Activated naive CD4-positive, alpha-beta T cell treated with anti-CD3 and anti-CD28 coated beads for 36 hours (primary cell): ENCODE measurements at regions of chr17 and their contacts with region 1.

Region 1: GRCh38 chr17:78140169-78140976 is 5.8 kb upstream of the C17orf99 start:
- DNase-seq: peak; percentile 96
- H3K4me3 Mint-ChIP-seq: peak overlapping the region; percentile 40
- H3K27ac Mint-ChIP-seq: peak overlapping the region; percentile 28
- H3K4me1 Mint-ChIP-seq: peaks cover 64% of the 10 kb centered on the region
- H3K27me3 Mint-ChIP-seq: no peaks in the 10 kb centered on the region

Region 2: DNA sequence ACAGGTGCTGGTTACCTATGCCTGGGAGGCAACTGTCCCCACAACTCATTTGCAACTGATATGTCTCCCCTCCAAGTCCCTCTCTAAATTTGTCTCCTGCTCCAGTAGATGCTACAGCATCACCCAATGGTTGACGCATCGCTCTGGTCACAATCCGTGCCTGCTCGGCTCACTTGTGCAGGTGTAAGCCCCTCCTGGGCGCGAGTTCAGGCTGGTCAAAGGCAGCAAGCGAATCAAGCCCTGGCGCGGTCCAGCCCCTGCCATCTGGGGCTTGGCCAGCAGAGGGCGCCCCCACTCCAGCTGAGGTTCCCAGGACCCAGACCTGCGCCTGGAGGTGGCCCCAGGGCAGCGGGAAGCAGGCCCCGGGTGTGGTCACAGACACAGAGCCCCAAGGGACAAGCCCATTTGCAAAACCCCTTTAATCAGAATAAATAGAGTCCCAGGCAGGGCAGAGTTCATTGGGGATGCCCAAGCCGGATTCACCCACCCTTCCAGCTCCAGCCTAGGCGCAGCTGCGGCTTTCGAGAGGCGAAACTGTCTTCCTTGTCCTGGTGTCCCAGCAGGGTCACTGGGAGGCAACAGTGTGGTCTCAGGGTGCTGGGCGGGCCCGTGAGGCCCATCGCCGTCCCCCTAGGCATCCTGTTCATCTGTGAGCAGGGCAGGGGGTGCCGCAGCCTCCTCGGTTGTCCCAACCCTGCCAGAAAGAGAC is 27.7 kb before region 1 on chr17:
- CTCF ChIA-PET with region 1: interaction called, 100 read pairs
- intact Hi-C with region 1: no loop called
- DNase-seq: peak; percentile 84
- H3K4me3 Mint-ChIP-seq: no peak overlapping the region
- H3K27ac Mint-ChIP-seq: peak overlapping the region; percentile 88
- H3K4me1 Mint-ChIP-seq: peaks cover 37% of the 10 kb centered on the region
- H3K27me3 Mint-ChIP-seq: no peaks in the 10 kb centered on the region

Region 3: GRCh38 chr17:78168242-78168902 is 28.0 kb after region 1 on chr17 and contains the start of gene SYNGR2:
- CTCF ChIA-PET with region 1: interaction called, 5 read pairs
- intact Hi-C with region 1: loop called (anchors 1 kb)
- DNase-seq: peak; percentile 87
- H3K4me3 Mint-ChIP-seq: peak within 1 kb of the TSS; percentile 75
- H3K27ac Mint-ChIP-seq: peak within 1 kb of the TSS; percentile 85
- H3K4me1 Mint-ChIP-seq: peaks cover 37% of the 10 kb centered on the region
- H3K27me3 Mint-ChIP-seq: no peaks in the 10 kb centered on the region
- total RNA-seq, gene SYNGR2: 96.3 to 103 TPM

Region 4: GRCh38 chr17:78186692-78187595 is 46.6 kb after region 1 on chr17 and contains the starts of genes AFMID and TK1:
- CTCF ChIA-PET with region 1: interaction called, 5 read pairs
- intact Hi-C with region 1: loop called (anchors 1 kb)
- DNase-seq: peak; percentile 97
- H3K4me3 Mint-ChIP-seq: peak within 1 kb of the TSS; percentile 83
- H3K27ac Mint-ChIP-seq: peak within 1 kb of the TSS; percentile 70
- H3K4me1 Mint-ChIP-seq: peaks cover 28% of the 10 kb centered on the region
- H3K27me3 Mint-ChIP-seq: no peaks in the 10 kb centered on the region
- total RNA-seq, gene AFMID: 13.6 to 13.7 TPM
- total RNA-seq, gene TK1: 165 to 173 TPM

Region 5: DNA sequence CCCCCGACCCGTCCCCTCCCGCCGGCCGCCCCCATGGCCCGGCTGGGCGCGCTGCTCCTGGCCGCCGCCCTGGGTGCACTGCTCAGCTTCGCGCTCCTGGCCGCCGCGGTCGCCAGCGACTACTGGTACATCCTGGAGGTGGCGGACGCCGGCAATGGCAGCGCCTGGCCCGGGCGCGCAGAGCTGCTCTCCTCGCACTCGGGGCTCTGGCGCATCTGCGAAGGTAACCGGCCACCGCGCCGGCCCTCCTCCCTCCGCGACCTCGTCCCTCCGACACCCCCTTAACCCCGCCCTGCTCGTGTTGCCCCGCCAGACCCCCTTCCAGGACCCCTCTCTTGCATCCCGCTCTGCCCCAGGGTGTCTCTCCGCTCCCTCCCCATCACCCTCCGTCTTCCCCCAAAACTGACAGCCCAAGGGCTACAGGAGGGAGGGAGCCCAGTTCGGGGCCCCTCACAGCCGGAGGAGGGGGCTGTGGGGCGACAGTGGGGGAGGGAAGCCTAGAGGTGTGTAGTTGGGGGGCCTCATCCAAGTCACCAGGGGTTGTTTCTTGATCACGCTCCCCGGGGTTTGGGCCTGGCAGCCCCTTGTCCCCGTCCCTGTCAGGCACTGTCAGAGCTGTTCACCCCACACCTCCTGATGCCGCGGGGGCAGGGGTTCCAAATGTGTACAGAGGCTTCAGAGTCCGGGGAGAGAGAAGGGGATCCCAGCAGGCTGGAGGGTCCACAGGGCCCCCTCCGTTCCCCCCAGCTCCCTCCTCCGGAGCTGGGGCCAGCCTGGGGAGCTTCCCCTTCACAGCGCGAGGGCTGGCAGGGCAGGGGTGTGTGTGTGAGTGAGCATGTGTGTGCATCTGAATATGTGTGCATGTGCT is 91.9 kb after region 1 on chr17:
- CTCF ChIA-PET with region 1: no interaction called
- intact Hi-C with region 1: no loop called
- DNase-seq: peak; percentile 46
- H3K4me3 Mint-ChIP-seq: no peak overlapping the region
- H3K27ac Mint-ChIP-seq: no peak overlapping the region
- H3K4me1 Mint-ChIP-seq: peaks cover 7% of the 10 kb centered on the region
- H3K27me3 Mint-ChIP-seq: peaks cover 26% of the 10 kb centered on the region